Transverse colon (tissue), 4 donors: ENCODE measurements at regions of chr21 and their contacts with region 1.

Region 1: GRCh38 chr21:20187028-20187427 is 811.2 kb upstream of the NCAM2 start:
- DNase-seq: no peak
- H3K4me3 ChIP-seq: no peak overlapping the region
- H3K27ac ChIP-seq: no peak overlapping the region
- H3K4me1 ChIP-seq: no peaks in the 10 kb centered on the region
- H3K27me3 ChIP-seq: no peaks in the 10 kb centered on the region
- CTCF ChIP-seq: no peak
- EP300 ChIP-seq: no peak
- POLR2A ChIP-seq: no peak

Region 2: DNA sequence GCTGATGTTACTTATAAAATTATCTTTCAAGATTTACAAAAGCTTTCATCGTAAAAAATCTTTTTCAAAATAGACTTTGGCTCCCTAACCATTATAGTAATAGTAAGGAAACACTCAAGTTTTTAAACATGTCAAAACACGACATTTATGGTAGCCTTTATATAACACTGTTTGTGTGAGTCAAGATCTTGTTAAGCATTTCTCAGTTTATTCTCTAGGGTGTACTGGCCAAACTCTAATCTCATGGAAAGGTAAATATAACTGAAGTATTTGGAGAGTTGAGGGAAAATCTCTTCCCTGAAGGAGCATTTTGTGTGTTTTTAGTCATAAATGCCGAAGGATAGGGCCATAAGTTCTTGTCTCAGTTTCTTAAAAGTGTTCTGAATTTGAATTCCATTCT is 20.3 kb after region 1 on chr21:
- in situ Hi-C with region 1: no loop called
- intact Hi-C with region 1: no loop called
- DNase-seq: no peak
- H3K4me3 ChIP-seq: no peak overlapping the region
- H3K27ac ChIP-seq: peak overlapping the region in 1 of 4 donors; percentile 31
- H3K4me1 ChIP-seq: no peaks in the 10 kb centered on the region
- H3K27me3 ChIP-seq: no peaks in the 10 kb centered on the region
- CTCF ChIP-seq: no peak
- EP300 ChIP-seq: no peak
- POLR2A ChIP-seq: no peak

Region 3: DNA sequence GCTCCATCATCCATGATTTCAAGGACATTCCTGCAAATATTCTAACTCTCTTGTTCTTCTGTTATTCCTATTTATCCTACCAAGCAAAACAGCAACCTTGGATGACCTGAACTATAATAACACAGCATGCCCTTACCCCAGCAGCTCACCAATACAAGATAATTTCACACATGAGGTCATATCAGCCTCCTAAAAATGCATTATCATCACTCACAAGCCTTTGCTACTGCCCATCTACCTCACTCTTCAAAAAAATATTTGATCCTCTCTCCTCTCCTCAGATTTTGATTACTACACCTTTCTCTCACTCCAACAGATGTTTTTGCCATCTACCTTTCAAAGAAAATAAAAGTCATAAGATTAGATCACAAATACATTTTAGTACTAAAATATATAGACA is 33.6 kb after region 1 on chr21:
- in situ Hi-C with region 1: no loop called
- intact Hi-C with region 1: loop called (anchors 2 kb)
- DNase-seq: no peak
- H3K4me3 ChIP-seq: no peak overlapping the region
- H3K27ac ChIP-seq: no peak overlapping the region
- H3K4me1 ChIP-seq: no peaks in the 10 kb centered on the region
- H3K27me3 ChIP-seq: no peaks in the 10 kb centered on the region
- CTCF ChIP-seq: no peak
- EP300 ChIP-seq: no peak
- POLR2A ChIP-seq: no peak